A673 (cell line): ENCODE measurements at regions of chr2 and their contacts with region 1.

Region 1: GRCh38 chr2:39913648-39914461 is 134.8 kb upstream of the THUMPD2 start:
- DNase-seq: peak; percentile 77
- H3K4me3 ChIP-seq: no peak overlapping the region
- H3K27ac ChIP-seq: no peak overlapping the region
- H3K4me1 ChIP-seq: no peaks in the 10 kb centered on the region
- H3K27me3 ChIP-seq: peaks cover 70% of the 10 kb centered on the region
- CTCF ChIP-seq: peak; percentile 87

Region 2: DNA sequence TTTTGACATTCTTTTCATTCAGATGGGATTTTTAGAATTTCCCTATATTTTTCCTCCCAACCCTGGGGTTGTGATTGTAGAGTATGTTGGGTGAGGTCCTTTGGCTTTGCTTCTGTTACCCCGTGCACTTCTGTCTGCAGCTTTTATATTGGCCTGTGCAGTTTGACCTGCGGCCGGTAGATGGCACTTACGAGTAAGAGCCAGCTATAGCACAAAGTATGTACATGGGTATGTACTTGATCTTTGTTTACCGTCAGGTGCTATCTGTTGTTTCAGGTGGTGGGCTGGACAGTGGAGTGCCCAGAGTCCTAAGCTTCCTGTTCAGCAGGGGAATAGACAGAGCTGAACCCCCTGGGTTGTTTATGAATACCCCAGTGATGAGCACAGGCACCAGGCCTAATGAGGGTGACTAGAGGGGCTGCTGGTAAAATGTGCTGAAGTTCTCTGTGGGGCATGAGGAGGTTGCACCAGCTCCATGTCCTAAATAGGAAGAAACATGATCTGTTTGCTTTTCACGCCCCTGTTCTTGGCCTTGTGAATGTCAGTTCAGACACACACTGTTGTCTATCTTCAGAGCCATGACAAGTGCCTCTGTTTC is 75.9 kb before region 1 on chr2:
- CTCF ChIA-PET with region 1: interaction called, 5 read pairs
- POLR2A ChIA-PET with region 1: no interaction called
- intact Hi-C with region 1: loop called (anchors 5 kb)
- DNase-seq: peak; percentile 57
- H3K4me3 ChIP-seq: no peak overlapping the region
- H3K27ac ChIP-seq: no peak overlapping the region
- H3K4me1 ChIP-seq: no peaks in the 10 kb centered on the region
- H3K27me3 ChIP-seq: no peaks in the 10 kb centered on the region
- CTCF ChIP-seq: peak; percentile 81

Region 3: GRCh38 chr2:40534528-40534927 is 620.7 kb after region 1 on chr2:
- CTCF ChIA-PET with region 1: interaction called, 12 read pairs
- POLR2A ChIA-PET with region 1: no interaction called
- intact Hi-C with region 1: no loop called
- DNase-seq: no peak
- H3K4me3 ChIP-seq: no peak overlapping the region
- H3K27ac ChIP-seq: no peak overlapping the region
- H3K4me1 ChIP-seq: no peaks in the 10 kb centered on the region
- H3K27me3 ChIP-seq: no peaks in the 10 kb centered on the region
- CTCF ChIP-seq: no peak

Region 4: DNA sequence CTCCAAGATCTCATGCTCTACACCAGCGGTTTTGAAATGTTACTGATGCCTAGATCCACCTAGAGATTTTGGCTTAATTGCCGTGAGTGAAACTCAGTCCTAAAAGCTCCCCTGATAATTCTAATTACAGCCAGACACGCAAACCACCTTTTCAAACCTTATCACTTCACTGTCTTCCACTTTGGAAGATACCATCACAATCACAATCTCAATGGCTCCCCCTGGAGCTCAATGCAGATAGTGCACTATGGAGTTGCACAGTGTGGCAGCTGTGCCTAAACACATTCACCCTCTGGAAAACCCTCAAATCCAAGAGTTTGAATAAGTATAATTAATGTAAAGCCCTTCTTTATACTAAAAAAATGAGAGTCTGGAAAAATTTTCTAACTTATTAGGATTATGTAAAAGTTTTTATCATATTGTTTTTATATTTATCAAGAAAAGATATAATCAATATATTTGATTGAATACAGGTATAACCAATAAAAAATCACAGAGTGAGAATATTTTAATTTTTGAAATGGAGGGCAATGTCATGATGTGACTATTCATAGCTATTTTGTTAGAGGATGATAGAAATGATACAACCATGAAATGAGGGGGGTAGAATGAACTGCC is 640.9 kb after region 1 on chr2:
- CTCF ChIA-PET with region 1: interaction called, 10 read pairs
- POLR2A ChIA-PET with region 1: no interaction called
- intact Hi-C with region 1: loop called (anchors 1 kb)
- DNase-seq: peak; percentile 63
- H3K4me3 ChIP-seq: no peak overlapping the region
- H3K27ac ChIP-seq: no peak overlapping the region
- H3K4me1 ChIP-seq: no peaks in the 10 kb centered on the region
- H3K27me3 ChIP-seq: peaks cover 31% of the 10 kb centered on the region
- CTCF ChIP-seq: peak; percentile 84

Region 5: DNA sequence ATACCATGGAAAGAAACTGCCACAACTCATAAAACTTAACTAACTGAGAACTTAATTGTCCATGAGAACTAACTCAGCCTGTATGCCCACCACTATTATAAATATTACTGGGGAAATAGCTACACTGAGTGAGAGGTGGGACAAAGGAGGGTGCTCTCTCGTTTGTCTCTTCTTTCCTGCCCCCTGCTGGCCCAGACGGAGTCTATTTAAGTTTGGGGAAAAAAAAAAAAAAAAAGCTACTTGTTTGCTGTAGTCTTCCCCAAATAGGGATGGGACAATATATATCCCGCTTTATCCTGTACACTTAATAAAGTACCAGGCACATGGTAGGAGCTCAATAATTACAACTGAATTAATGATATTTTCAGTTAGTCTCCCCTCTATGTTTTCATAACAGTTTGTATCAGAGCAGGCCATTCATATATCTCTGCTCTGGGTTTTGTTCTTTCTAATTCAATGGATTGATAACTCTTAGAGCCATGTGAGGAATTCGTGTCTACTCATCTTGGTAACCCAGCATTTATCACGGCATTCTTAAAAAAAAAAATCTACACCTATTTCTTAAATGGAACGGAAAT is 1486.3 kb after region 1 on chr2:
- CTCF ChIA-PET with region 1: interaction called, 5 read pairs
- POLR2A ChIA-PET with region 1: no interaction called
- intact Hi-C with region 1: loop called (anchors 5 kb)
- DNase-seq: peak; percentile 62
- H3K4me3 ChIP-seq: no peak overlapping the region
- H3K27ac ChIP-seq: no peak overlapping the region
- H3K4me1 ChIP-seq: peaks cover 8% of the 10 kb centered on the region
- H3K27me3 ChIP-seq: peaks cover 3% of the 10 kb centered on the region
- CTCF ChIP-seq: peak; percentile 66

Region 6: DNA sequence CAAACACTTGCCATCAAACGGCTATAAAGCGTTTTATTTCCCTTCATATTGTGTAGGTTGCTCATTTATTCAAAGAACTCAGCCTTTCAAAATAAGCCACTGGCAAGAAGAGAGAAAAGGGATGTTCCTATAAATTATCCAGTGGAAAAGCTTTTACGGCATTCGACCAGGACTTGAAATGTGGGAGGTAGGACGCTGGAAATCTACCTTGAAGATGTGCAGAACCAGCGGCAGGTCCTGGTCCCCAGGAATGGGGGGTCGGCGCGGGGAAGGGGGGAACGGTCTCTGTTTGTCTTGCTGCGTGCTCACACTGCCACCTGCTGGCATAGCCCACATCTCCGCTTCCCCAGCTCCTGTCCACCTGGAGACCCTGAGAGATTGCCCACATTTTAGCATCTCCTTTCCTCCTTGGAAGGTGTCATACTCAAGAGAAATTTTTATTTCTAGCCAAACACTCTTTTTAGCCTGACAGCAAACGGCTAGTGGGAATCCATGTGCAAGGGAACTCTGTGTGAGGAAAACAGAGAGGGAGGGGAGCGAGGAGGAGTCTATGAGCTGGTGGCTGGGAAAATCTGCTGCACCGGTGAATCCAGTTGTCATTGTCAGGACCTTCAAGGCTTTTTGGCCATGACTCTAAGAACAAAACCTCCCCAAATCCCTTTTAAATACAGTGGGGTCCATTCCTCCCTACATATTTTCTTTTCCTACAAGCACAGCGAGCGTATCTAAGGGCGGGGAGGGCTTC is 1785.0 kb after region 1 on chr2:
- CTCF ChIA-PET with region 1: interaction called, 4 read pairs
- POLR2A ChIA-PET with region 1: no interaction called
- intact Hi-C with region 1: loop called (anchors 10 kb)
- DNase-seq: peak; percentile 42
- H3K4me3 ChIP-seq: peak overlapping the region; percentile 4
- H3K27ac ChIP-seq: no peak overlapping the region
- H3K4me1 ChIP-seq: no peaks in the 10 kb centered on the region
- H3K27me3 ChIP-seq: peaks cover 25% of the 10 kb centered on the region
- CTCF ChIP-seq: peak; percentile 91

Region 7: DNA sequence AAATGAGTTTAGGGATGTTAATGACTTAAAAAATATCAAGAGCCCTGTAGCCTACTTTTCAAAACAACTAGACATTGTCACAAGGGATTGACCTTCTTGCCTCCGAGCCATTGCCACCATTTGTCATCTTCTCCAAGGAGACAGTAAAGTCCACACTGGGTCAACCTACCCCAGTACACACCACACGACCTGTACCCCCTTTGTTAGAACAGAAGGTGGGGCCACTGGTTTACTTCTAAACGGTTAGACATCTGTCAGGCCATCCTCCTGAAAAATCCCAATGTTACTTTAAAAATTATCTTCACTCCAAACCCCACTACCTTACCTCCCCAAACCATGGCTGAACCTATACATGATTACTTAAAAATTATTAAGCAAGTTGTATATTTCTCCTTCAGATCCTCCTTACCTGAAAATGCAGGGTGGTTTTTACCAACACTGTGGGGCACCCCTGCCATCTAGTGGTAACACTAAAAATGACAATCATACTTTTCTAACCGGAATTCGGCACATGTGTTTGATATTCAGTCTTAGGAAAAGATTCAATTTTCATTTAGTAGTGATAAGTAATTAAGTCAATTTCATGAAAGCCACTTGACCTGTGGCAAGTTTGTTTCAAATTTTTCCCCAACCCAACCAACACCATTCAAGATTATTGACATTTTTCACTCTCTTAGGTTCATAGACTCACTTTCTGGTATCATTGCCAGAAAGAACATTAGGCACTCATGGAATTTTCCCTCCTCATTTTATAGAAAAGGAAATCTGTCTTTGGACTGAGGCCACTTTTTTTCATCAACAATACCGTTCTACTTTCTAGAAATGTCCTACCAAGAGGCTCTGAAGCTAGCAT is 1868.7 kb after region 1 on chr2:
- CTCF ChIA-PET with region 1: no interaction called
- POLR2A ChIA-PET with region 1: no interaction called
- intact Hi-C with region 1: loop called (anchors 10 kb)
- DNase-seq: peak; percentile 55
- H3K4me3 ChIP-seq: no peak overlapping the region
- H3K27ac ChIP-seq: no peak overlapping the region
- H3K4me1 ChIP-seq: no peaks in the 10 kb centered on the region
- H3K27me3 ChIP-seq: peaks cover 9% of the 10 kb centered on the region
- CTCF ChIP-seq: peak; percentile 86